ENCODE measurements at regions of chr1 and their contacts with region 1.

Region 1: DNA sequence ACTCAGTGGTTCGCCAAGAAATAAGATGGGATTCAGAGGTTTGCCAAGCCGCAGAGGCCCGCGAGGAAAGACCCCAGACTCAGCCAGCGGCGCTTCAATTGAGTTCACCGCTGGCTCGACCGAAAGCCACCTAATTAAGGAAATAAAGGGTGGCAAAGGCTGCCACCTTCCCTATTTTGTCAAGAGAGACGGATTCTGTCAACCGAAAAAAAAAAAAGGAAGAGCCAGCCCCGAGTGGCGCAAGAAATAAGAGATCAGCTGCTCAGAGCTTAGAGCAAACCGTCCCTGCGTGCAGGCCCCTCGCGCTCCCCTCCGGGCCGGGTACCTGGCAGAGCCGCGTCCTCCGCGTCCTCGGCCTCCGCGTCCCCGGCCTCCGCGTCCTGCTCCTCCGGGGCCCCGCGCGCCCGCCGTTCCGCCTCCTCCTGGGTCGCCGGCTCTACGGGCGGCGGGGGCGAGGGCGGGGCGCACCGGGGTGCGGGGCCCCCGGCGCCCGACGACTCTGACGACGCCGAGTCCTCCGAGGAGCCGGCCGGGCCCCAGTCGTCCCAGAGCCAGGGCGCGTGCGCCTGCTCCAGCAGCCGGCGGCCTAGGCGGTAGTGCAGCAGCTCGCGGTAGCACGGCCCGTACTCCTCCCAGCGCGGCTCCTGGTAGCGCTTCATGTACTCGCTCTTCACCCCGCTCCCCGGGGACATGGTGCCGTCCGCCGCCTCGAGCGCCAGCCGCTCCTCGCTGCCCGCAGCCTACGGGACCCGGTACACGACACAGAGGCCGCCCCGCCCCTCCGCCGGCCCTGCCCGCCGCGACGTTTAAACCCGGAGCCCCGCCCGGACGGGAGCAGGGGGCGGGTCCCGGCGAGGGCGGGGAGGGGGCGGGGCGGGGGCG is 832 bp downstream of the CCSAP start:
- DNase-seq: peak; percentile 91
- ATAC-seq: peak; percentile 82
- H3K4me3 ChIP-seq: peak overlapping the region; percentile 66 to 86 (median 80)
- H3K4me3 Mint-ChIP-seq: peak overlapping the region; percentile 88
- H3K27ac ChIP-seq: peak overlapping the region; percentile 24 to 79
- H3K27ac Mint-ChIP-seq: peak overlapping the region; percentile 90
- H3K4me1 ChIP-seq: peaks cover 21 to 23% of the 10 kb centered on the region in 2 donors
- H3K4me1 Mint-ChIP-seq: peaks cover 42% of the 10 kb centered on the region
- H3K27me3 ChIP-seq: peaks cover 0 to 12% (median 3%) of the 10 kb centered on the region in 4 experiments
- H3K27me3 Mint-ChIP-seq: peaks cover 20% of the 10 kb centered on the region
- CTCF ChIP-seq: no peak

Region 2: DNA sequence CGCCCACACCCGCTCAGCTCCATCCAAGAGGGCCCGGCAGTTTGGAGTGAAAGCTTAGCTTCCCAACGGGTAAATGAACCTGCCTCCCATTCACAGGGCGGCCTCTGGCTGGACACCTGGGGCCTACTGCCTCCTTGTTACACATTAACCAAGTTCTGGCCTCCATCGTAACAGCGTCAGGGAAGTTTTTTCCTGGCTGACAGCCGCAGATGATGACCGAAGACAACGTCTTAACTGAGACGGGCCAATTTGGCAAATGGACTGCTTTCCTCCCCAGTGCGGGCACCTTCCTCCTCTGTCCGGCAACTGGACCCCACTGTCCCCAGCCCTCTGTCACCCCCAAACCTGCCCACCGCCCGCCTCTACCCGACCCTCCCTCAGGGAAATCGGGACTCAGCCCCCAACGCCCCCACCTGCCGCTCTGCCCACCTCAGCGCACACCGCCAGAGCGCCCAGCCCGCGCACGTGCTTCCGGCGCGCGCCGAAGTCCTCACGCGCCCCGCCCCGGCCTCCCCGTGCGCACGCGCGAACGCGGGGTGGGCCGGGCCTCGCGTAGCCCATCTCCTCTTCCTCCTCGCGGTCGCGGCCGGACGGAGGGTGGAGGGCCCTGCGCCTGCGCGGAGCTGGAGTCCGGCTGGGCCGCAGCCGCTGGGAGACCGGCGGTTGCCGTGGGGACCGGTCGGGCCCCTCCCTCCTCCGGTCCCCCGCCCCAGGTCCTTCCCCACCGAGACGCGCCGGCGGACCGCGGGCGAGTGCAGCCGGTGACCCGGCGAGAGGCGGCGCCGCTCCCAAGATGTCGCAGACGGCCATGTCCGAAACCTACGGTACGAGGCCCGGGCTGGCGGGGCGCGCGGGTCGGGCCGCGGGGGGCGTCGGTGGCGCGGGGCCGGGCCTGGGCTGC is 71.2 kb before region 1 on chr1 and contains the start of gene RAB4A:
- CTCF ChIA-PET with region 1: interaction called, 5 read pairs
- POLR2A ChIA-PET with region 1: interaction called, 4 read pairs
- intact Hi-C with region 1: loop called (anchors 1 kb)
- DNase-seq: peak; percentile 90
- ATAC-seq: peak; percentile 90
- H3K4me3 ChIP-seq: peak within 1 kb of the TSS; percentile 59 to 89 (median 75)
- H3K4me3 Mint-ChIP-seq: peak within 1 kb of the TSS; percentile 96
- H3K27ac ChIP-seq: peak within 1 kb of the TSS; percentile 24 to 49
- H3K27ac Mint-ChIP-seq: peak within 1 kb of the TSS; percentile 85
- H3K4me1 ChIP-seq: peaks cover 16 to 22% of the 10 kb centered on the region in 2 donors
- H3K4me1 Mint-ChIP-seq: peaks cover 30% of the 10 kb centered on the region
- H3K27me3 ChIP-seq: no peaks in the 10 kb centered on the region
- H3K27me3 Mint-ChIP-seq: no peaks in the 10 kb centered on the region
- CTCF ChIP-seq: no peak
- total RNA-seq, gene RAB4A: 46.0 and 49.7 TPM in 2 replicates

Region 3: GRCh38 chr1:229280921-229281320 is 61.1 kb before region 1 on chr1:
- CTCF ChIA-PET with region 1: no interaction called
- POLR2A ChIA-PET with region 1: no interaction called
- intact Hi-C with region 1: no loop called
- DNase-seq: no peak
- ATAC-seq: no peak
- H3K4me3 ChIP-seq: no peak overlapping the region
- H3K4me3 Mint-ChIP-seq: no peak overlapping the region
- H3K27ac ChIP-seq: no peak overlapping the region
- H3K27ac Mint-ChIP-seq: no peak overlapping the region
- H3K4me1 ChIP-seq: peaks cover 0 to 6% of the 10 kb centered on the region in 2 donors
- H3K4me1 Mint-ChIP-seq: peaks cover 42% of the 10 kb centered on the region
- H3K27me3 ChIP-seq: no peaks in the 10 kb centered on the region
- H3K27me3 Mint-ChIP-seq: no peaks in the 10 kb centered on the region
- CTCF ChIP-seq: no peak

Region 4: GRCh38 chr1:229328598-229329362 is 13.2 kb before region 1 on chr1:
- CTCF ChIA-PET with region 1: interaction called, 6 read pairs
- POLR2A ChIA-PET with region 1: no interaction called
- intact Hi-C with region 1: loop called (anchors 2 kb)
- DNase-seq: no peak
- ATAC-seq: no peak
- H3K4me3 ChIP-seq: no peak overlapping the region
- H3K4me3 Mint-ChIP-seq: no peak overlapping the region
- H3K27ac ChIP-seq: peak overlapping the region in 1 of 2 donors; percentile 33
- H3K27ac Mint-ChIP-seq: peak overlapping the region; percentile 68
- H3K4me1 ChIP-seq: peaks cover 16 to 18% of the 10 kb centered on the region in 2 donors
- H3K4me1 Mint-ChIP-seq: peaks cover 41% of the 10 kb centered on the region
- H3K27me3 ChIP-seq: no peaks in the 10 kb centered on the region
- H3K27me3 Mint-ChIP-seq: no peaks in the 10 kb centered on the region
- CTCF ChIP-seq: no peak

Region 5: GRCh38 chr1:229370601-229371021 is 28.6 kb after region 1 on chr1:
- CTCF ChIA-PET with region 1: no interaction called
- POLR2A ChIA-PET with region 1: no interaction called
- intact Hi-C with region 1: no loop called
- DNase-seq: peak; percentile 20
- ATAC-seq: peak; percentile 69
- H3K4me3 ChIP-seq: no peak overlapping the region
- H3K4me3 Mint-ChIP-seq: no peak overlapping the region
- H3K27ac ChIP-seq: no peak overlapping the region
- H3K27ac Mint-ChIP-seq: no peak overlapping the region
- H3K4me1 ChIP-seq: peaks cover 0 to 9% of the 10 kb centered on the region in 2 donors
- H3K4me1 Mint-ChIP-seq: peaks cover 10% of the 10 kb centered on the region
- H3K27me3 ChIP-seq: peaks cover 0 to 10% (median 1%) of the 10 kb centered on the region in 4 experiments
- H3K27me3 Mint-ChIP-seq: peaks cover 33% of the 10 kb centered on the region
- CTCF ChIP-seq: no peak

Region 6: DNA sequence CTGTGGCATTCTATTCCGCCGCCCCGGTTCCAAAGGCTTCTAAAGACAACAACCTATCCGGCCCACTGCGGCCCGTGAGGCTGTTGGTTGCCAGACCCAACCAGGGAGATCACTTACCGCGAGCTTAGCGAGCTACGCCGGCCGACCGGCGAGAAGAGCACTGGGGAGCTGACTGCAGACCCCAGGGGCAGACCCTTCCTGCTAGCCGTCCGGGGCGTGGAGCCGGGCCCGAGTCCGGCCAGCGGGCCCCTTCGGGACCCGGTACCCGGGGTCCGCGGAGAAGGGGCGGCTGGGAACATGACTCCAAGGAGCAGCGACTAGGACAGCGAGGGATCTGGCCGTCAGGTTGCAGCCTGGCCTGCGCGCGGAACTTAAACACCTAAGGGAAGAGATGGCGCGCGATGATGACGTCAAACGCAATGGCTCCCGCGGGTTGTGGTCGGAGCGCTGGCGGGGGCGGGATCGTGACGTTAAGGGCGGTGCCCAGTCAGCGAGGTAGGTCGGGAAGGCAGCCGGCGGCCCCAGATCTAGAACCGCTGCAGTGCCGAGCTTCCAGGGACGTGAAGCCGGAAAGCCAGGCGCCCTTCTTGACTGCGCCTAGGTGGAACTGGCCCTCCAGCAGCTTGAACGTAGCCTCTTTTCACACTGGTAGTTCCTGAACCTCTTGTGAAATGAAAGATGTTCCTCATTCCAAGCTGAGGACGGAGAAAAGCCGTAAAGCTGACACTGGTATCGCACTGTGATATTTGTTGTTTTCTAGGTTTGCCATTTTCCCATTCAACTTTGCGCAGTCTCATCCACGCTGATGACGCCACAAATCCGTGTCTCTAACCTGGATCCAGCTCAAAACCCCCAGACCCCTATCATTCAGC is 166.2 kb after region 1 on chr1 and contains the start of gene NUP133:
- CTCF ChIA-PET with region 1: interaction called, 5 read pairs
- POLR2A ChIA-PET with region 1: no interaction called
- intact Hi-C with region 1: loop called (anchors 1 kb)
- DNase-seq: peak; percentile 99
- ATAC-seq: peak; percentile 95
- H3K4me3 ChIP-seq: peak within 1 kb of the TSS; percentile 87 to 99 (median 92)
- H3K4me3 Mint-ChIP-seq: peak within 1 kb of the TSS; percentile 96
- H3K27ac ChIP-seq: peak within 1 kb of the TSS; percentile 93 to 94
- H3K27ac Mint-ChIP-seq: peak within 1 kb of the TSS; percentile 99
- H3K4me1 ChIP-seq: peaks cover 14 to 17% of the 10 kb centered on the region in 2 donors
- H3K4me1 Mint-ChIP-seq: peaks cover 23% of the 10 kb centered on the region
- H3K27me3 ChIP-seq: no peaks in the 10 kb centered on the region
- H3K27me3 Mint-ChIP-seq: no peaks in the 10 kb centered on the region
- CTCF ChIP-seq: no peak
- total RNA-seq, gene NUP133: 49.7 and 50.5 TPM in 2 replicates

Region 7: DNA sequence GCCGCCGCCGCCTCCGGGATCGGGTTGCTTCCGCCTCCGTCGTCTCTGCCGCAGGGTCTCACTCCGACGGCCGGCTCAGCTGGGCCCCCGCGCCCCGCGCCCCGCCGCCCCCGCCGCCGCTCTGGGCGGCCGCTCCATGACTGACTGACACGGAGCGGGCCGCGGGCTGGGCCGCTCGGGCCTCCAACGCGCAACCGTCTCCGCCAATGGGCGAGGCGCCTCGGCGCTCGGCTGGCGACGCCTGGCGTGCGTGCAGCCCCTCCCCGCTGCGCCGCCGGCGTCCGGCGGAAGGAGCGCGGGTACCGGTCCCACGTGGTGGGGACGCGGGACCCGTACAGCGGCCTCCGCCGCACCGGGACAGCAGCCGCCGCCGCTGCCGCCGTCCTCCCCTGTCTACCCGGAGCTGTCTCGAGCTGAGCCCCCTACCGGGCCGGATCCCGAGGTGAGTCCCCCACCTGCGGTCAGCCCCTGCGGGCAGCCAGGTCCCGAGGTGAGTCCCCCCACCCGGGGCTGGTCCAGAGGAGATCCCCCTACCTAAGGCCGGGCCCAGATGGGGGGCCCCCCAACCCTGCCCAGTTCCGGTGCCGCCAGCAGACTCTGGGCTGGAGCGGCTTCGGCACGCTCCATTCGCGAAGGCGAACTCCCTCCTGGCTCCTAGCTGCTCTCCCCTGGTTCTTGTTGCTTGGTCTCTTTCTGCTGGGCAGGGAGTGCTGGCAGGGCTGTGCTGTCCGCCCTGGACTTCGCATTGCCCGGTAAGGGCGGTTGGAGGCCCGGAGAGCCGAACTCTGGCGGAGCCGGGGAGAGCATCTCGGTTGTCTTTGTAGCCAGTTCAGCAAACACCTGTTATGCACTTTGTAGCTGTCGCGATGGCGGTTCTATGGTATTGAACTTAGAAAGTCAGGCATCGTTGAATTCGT is 284.2 kb after region 1 on chr1 and contains the starts of genes TAF5L and URB2:
- CTCF ChIA-PET with region 1: no interaction called
- POLR2A ChIA-PET with region 1: no interaction called
- intact Hi-C with region 1: loop called (anchors 1 kb)
- DNase-seq: peak; percentile 90
- ATAC-seq: peak; percentile 92
- H3K4me3 ChIP-seq: peak within 1 kb of the TSS; percentile 74 to 91 (median 86)
- H3K4me3 Mint-ChIP-seq: peak within 1 kb of the TSS; percentile 98
- H3K27ac ChIP-seq: peak within 1 kb of the TSS; percentile 58 to 82
- H3K27ac Mint-ChIP-seq: peak within 1 kb of the TSS; percentile 93
- H3K4me1 ChIP-seq: peaks cover 25 to 28% of the 10 kb centered on the region in 2 donors
- H3K4me1 Mint-ChIP-seq: peaks cover 48% of the 10 kb centered on the region
- H3K27me3 ChIP-seq: no peaks in the 10 kb centered on the region
- H3K27me3 Mint-ChIP-seq: no peaks in the 10 kb centered on the region
- CTCF ChIP-seq: no peak
- total RNA-seq, gene TAF5L: 21.2 and 24.0 TPM in 2 replicates
- total RNA-seq, gene URB2: 9.6 and 11.2 TPM in 2 replicates

Measured in B cell (primary cell).